ENCODE measurements at regions of chr9 and their contacts with region 1.

Region 1: GRCh38 chr9:133144137-133144903 is 19.4 kb downstream of the GBGT1 start:
- DNase-seq: peak; percentile 46 to 89
- H3K4me3 ChIP-seq: peak overlapping the region; percentile 37 to 63
- H3K27ac ChIP-seq: peak overlapping the region in 1 of 2 donors; percentile 21
- H3K4me1 ChIP-seq: peaks cover 10 to 28% of the 10 kb centered on the region in 2 donors
- H3K27me3 ChIP-seq: no peaks in the 10 kb centered on the region
- CTCF ChIP-seq: peak; percentile 98 to 99 (median 98)

Region 2: GRCh38 chr9:133103183-133103986 is 40.9 kb before region 1 on chr9:
- intact Hi-C with region 1: loop called (anchors 1 kb)
- DNase-seq: peak in 1 of 2 donors; percentile 61
- H3K4me3 ChIP-seq: no peak overlapping the region
- H3K27ac ChIP-seq: no peak overlapping the region
- H3K4me1 ChIP-seq: no peaks in the 10 kb centered on the region
- H3K27me3 ChIP-seq: no peaks in the 10 kb centered on the region
- CTCF ChIP-seq: peak; percentile 95 to 98 (median 95)

Region 3: DNA sequence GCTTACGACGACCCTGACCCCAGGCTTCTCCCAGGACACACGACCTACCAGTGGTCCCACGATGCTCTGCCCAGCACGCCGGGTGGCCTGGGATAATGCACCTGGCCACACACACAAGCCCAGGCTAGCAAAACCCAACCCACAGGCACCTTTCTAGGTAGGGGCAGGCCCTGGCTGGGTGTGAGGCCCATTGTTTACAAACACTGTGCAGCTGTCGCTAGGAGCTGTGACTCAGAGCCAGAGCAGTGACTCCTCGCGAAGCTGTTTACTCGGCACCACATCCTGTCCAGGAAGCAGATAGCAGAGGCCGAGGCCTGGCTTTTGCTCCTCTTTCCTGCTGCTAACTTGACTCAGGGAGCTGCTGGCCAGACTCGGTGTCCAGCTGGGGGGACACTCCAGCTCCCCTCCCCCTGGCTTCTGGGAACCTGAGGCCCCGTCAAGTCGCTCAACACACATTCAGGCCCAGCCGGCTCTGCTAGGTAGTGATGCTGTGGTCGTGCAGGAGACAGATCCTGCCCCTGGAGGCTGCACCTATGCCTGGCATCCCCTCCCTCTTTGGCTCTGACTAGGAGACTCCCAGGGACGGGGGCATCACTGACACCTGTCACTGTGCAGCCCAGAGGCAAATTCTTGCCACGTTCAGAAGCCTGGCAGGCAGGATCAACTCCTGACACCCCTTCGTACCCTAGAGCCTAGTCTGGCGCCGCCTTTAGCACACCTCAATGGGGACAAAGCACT is 10.5 kb before region 1 on chr9:
- intact Hi-C with region 1: no loop called
- DNase-seq: peak; percentile 76 to 91
- H3K4me3 ChIP-seq: no peak overlapping the region
- H3K27ac ChIP-seq: peak overlapping the region; percentile 51 to 83
- H3K4me1 ChIP-seq: peaks cover 7 to 29% of the 10 kb centered on the region in 2 donors
- H3K27me3 ChIP-seq: no peaks in the 10 kb centered on the region
- CTCF ChIP-seq: no peak

Region 4: DNA sequence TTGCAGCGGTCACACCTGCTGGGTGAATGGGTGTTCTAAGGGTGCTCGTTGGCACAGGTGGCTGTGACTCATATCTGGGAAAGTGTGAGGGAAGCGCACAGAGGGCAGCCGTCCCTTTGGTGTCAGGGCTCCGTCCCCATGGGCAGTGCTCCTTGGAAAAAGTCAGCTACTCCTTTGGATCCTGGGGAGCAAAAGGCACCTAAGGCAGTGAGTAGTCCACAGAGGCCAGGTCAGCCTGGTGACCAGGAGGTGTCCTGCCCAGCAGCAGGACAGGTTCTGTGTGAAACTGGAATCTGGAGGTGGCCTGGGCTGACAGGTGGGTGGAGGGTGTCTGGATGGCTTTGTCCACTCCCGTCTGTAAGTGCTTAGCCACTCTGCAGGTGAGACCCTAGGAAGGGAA is 37.9 kb after region 1 on chr9:
- intact Hi-C with region 1: no loop called
- DNase-seq: no peak
- H3K4me3 ChIP-seq: no peak overlapping the region
- H3K27ac ChIP-seq: no peak overlapping the region
- H3K4me1 ChIP-seq: no peaks in the 10 kb centered on the region
- H3K27me3 ChIP-seq: no peaks in the 10 kb centered on the region
- CTCF ChIP-seq: no peak